PC-9 (cell line): ENCODE measurements at regions of chr19 and their contacts with region 1.

Region 1: DNA sequence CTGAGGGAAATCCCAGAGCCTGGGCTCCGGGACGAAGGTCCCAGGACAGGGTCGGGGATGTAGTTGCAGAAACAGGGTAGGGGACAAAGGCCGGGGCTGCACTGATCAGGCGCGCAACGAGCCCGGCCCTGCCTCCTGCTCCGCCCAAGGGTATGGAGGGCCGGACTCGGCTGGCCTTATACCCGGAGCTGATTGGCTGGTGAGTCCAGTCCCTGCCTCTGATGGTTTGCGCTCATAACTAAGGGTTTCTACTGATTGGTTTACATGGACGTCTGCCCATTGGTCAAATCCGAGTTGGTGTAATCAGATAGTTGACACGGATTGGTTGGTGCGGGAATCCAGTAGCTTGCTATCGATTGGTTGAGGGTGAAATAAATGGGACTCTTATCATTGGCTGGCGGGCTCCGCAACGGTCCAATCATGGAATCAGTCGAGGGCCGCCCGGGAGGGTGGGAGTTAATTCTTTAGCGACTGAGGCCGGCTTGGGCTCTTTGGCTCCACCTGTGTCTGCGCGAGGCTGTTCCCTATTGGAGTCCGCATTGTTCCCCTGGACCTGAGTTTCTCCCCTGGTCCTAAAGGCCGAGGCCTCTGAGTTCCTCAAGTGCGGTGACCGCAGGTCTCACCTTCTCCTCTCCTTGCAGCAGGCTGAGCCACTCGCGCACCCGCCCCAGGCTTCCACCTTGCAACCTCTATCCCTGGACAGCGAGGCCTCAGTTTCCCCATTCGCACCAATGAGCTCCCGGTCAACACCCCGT is 570 bp upstream of the MPND start:
- DNase-seq: peak; percentile 90 to 98
- H3K4me3 ChIP-seq: peak overlapping the region; percentile 61
- H3K27ac ChIP-seq: peak overlapping the region; percentile 56
- H3K4me1 ChIP-seq: no peaks in the 10 kb centered on the region
- H3K27me3 ChIP-seq: no peaks in the 10 kb centered on the region
- CTCF ChIP-seq: no peak

Region 2: DNA sequence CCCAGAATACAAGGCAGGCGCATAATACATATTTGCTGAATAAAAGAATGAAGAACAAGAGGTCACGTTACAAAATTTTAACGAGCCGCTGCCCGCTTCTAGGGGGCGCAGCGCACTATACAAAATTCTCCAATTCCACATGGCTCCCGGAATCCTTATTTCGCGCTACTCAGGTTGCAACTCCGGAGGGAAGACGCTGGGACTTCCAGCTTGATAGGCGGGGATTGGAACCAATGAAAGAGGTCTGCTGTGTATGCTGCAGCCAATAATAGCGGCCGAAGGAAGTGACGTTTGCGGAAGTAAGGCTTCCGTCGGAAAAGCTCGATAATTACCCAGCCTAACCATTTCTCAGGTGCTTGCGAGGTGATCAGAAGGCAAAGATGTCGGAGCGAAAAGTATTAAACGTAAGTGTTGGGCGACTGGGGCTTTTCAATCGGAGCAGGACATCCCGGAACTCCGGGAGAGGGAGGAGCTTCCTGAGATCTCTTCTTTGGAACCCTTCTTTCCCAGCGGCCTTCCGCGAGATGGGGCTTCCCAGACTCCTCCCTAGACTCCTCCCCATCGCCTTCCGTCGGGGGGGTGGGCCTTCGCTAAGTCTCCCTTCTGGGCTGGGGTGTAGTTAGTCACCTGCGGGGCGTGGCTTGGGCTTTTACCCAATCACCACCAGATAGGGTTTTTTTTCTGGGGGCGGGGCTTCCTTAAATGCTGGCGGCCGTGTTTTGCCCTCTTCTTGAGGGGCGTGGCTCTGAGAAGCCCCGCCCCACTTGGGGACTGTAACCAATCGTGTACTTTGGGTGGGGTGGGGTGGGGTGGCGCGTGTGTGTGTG is 95.8 kb before region 1 on chr19 and contains the start of gene YJU2:
- CTCF ChIA-PET with region 1: no interaction called
- POLR2A ChIA-PET with region 1: interaction called, 11 read pairs
- intact Hi-C with region 1: no loop called
- DNase-seq: peak; percentile 92 to 95
- H3K4me3 ChIP-seq: peak within 1 kb of the TSS; percentile 78
- H3K27ac ChIP-seq: peak within 1 kb of the TSS; percentile 87
- H3K4me1 ChIP-seq: no peaks in the 10 kb centered on the region; the same call in 1 of the 2 replicates
- H3K27me3 ChIP-seq: no peaks in the 10 kb centered on the region
- CTCF ChIP-seq: peak; percentile 49; the same call in 1 of the 2 replicates
- total RNA-seq, gene YJU2: 8.7 and 11.0 TPM in 2 replicates